HEK293 (cell line): ENCODE measurements at regions of chr2 and their contacts with region 1.

Region 1: DNA sequence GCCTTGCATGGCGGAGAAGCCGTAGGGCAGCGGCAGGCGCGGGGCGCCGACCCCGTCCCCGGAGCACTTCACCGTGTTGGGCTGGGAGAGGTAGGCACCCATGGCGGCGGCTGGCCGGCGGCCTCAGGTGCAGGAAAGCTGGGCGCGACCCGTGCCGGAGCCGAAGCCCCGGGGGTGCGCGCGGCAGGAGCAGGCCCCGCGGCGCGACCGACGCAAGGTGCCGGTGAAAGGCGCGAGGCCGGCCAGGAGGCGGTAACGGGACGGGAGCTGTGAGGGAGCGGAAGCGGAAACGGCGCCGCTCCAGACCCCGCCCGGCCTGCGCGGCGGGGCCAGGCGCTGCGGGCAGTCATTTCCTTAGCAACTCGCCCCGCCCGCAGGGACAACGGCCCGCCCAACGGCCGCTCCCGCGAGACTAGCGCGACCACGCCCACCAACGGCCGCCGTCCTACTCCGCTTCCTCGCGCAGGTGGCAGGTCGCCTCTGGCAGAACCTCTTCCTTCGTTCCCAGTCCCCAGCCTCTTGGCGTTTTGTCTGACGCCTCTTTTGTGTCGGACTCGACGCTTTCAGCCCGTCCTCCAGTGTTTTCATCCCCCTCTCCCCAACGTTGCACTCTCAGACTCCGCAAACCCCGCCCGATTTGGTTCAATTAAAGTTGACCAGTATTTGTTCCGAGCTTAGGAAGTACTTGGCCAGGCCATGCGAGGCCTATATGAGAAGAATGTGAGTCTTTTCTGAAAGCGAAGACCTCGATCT is at the start of gene PPM1G:
- H3K4me3 ChIP-seq: peak within 1 kb of the TSS; percentile 98
- H3K27ac ChIP-seq: peak within 1 kb of the TSS; percentile 96
- H3K4me1 ChIP-seq: peaks cover 9% of the 10 kb centered on the region; the same call in 1 of the 2 replicates
- CTCF ChIP-seq: peak; percentile 4

Region 2: DNA sequence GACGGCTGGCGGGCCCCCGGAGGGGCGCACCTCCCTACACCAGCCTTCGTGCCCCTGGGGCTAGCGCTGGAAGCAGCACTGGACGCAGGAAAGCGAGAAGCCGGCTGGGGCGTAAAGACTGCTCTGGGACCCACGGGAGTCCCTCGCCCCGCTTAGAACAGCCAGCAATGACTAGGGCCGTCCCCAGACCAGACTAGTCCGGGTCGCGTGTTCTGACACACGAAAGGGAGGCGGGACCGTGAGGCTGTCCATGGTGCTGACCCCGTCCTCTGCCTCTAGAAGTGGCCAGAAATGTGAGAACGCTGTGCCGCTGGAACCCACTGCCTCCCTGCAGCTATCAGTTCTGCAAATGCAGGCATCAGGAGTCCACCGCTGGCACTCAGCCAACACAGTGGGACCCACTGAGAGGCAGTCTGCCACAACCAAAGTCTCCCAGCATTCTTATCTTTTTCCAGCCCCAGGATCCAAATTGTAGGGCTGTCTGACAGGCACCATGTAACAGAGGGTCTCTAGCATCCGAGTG is 101.1 kb before region 1 on chr2 and contains the start of gene UCN:
- CTCF ChIA-PET with region 1: no interaction called
- POLR2A ChIA-PET with region 1: no interaction called
- H3K4me3 ChIP-seq: no peak within 1 kb of the TSS
- H3K27ac ChIP-seq: no peak within 1 kb of the TSS
- H3K4me1 ChIP-seq: no peaks in the 10 kb centered on the region
- CTCF ChIP-seq: no peak

Region 3: DNA sequence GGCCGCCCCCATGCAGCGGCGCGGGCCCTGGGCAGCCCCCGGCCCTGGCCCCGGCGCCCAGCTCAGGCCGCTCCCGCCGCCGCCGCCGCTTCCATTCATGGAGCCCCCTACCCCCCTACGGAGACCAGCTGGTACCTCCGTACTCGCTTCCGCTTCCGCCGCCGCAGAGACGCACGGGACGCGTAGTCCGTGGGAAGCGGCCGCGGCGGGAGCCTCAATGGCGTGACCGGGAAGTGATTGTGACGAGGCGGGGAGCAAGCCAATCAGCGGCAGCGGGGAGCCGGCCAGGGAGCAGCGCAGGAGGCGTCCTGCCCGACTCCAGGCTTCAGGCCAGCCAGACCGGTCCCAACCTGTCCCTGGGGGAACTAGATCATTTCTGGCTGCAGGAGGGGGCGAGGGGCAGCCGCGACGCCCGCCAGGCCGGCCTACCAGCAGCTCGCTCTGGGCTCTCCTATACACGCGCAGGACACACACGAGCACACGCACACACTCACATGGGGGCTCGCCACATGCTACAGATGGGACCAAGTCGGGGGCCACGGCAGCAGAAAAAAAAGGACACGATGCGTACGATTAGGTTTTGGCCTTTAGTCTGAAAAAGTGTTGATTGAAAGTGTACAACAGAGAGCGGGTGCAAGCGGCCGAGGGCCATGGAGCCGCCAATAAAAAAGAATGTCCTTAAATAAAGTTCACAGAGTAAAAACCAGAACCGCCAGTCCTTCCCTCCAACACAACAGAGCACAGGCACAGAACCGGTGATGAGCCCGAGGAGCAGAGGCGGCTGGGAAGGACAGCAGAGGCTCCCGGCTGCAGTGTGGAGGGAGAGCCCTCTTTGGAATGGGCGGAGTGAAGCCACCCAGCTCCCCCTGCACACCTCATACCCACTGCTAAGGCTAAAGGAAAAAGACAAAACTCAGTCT is 28.6 kb before region 1 on chr2 and contains the start of gene ZNF513:
- CTCF ChIA-PET with region 1: no interaction called
- POLR2A ChIA-PET with region 1: interaction called, 13 read pairs
- H3K4me3 ChIP-seq: peak within 1 kb of the TSS; percentile 72
- H3K27ac ChIP-seq: peak within 1 kb of the TSS; percentile 82
- H3K4me1 ChIP-seq: no peaks in the 10 kb centered on the region; the same call in 1 of the 2 replicates
- CTCF ChIP-seq: no peak

Region 4: DNA sequence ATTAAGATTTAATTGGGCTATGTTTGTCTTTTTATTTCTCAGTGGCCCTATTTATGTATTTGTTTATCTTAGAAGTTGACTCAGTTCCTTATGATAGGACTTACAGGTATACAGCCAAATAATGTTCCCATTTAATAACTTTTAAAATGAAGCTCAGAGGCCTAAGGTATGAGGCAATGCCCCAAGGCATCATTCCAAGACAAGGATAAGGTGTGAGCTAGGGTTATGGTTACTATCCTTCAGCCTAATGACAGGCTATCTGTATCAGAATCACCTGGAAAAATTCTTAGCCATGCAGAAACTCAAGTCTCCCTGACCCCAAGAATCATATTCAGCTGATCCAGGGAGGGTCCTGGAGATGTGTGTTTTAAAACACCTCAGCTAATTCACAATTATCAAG is 11.5 kb after region 1 on chr2:
- CTCF ChIA-PET with region 1: interaction called, 5 read pairs
- POLR2A ChIA-PET with region 1: interaction called, 13 read pairs
- H3K4me3 ChIP-seq: no peak overlapping the region
- H3K27ac ChIP-seq: no peak overlapping the region
- H3K4me1 ChIP-seq: no peaks in the 10 kb centered on the region
- CTCF ChIP-seq: no peak

Region 5: DNA sequence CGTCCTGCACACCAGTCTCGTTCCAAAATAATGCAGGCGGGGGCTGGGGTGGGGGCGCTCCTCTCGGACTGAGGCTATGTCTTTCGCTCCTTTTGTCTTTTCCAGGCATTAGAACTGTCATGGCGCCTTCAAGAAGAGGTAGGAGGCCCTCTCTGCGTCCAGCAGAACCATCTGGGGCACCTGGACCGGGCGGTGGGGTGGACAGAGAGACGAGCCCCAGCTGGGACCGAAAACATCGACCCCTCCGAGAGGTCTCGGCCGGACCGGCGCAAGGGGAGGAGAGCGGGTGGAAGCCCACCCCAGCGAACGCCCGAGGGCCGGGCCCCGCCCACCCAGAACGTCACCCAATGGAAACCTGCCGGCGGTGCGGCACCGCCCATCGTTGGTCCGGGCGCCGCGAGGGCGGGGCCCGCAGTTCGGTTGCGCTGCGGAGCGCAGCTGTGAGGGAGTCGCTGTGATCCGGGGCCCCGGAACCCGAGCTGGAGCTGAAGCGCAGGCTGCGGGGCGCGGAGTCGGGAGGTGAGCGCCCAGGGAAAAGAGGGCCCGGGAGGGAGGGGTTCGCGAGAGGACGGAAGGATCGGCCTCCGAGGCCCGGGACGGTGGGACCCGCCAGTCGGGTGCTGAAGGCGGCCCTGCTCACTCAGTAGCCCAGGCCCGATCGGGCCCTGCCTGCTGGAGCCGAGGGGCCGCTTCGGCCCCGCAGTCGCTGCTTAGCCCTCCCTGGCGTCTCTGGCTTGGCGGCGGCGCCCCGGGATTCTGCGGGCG is 18.9 kb after region 1 on chr2 and contains the start of gene NRBP1:
- CTCF ChIA-PET with region 1: interaction called, 15 read pairs
- POLR2A ChIA-PET with region 1: interaction called, 56 read pairs
- H3K4me3 ChIP-seq: peak within 1 kb of the TSS; percentile 70
- H3K27ac ChIP-seq: peak within 1 kb of the TSS; percentile 96
- H3K4me1 ChIP-seq: peaks cover 11% of the 10 kb centered on the region
- CTCF ChIP-seq: peak; percentile 69

Region 6: DNA sequence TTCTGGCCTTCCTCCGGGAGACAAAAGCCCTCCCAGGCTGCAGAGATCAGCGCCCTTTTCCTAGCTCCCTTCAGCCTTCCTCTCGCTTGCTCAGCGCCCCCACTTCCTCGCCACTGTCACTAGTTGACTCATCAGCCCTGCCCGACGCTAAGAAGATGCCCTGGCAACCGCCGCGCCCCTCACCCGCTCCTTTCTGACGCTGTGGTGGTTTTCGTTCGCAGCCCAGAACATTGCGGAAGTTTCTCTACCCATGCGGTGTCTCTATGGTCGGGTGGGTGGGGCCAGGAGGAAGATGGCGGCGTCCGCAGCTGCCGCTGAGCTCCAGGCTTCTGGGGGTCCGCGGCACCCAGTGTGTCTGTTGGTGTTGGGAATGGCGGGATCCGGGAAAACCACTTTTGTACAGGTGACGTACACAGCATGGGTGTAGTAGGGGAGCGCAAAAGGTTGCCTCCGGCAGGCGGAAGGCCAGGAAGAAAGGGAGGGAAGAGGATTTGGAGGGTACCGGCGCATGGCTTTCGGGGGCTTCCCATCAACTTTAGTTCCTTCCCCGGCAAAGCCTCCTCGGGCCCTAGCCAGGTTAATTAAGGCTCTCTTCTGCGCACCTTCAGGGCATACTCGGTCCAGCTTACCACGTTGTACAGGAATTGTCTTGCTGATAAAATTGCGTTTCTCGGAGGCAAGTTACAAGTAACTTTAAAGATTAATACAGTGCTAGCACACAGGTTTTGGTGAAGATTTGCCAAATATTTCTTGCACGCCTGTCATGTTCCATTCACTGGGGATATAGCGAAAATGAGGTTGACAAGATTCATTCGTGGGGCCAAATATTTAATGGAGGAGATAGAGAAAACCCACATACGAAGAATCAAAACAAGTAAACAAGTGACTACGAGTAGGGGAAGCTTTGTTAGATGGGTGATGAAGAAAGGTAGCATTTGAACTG is 219.5 kb after region 1 on chr2 and contains the starts of genes CCDC121 and GPN1:
- CTCF ChIA-PET with region 1: no interaction called
- POLR2A ChIA-PET with region 1: interaction called, 11 read pairs
- H3K4me3 ChIP-seq: peak within 1 kb of the TSS; percentile 55
- H3K27ac ChIP-seq: peak within 1 kb of the TSS; percentile 42; the same call in 1 of the 2 replicates
- H3K4me1 ChIP-seq: 0 out of 2 replicates have a peak, but pooled peaks cover 2% of the 10 kb centered on the region
- CTCF ChIP-seq: no peak; the same call in 1 of the 2 replicates

Region 7: DNA sequence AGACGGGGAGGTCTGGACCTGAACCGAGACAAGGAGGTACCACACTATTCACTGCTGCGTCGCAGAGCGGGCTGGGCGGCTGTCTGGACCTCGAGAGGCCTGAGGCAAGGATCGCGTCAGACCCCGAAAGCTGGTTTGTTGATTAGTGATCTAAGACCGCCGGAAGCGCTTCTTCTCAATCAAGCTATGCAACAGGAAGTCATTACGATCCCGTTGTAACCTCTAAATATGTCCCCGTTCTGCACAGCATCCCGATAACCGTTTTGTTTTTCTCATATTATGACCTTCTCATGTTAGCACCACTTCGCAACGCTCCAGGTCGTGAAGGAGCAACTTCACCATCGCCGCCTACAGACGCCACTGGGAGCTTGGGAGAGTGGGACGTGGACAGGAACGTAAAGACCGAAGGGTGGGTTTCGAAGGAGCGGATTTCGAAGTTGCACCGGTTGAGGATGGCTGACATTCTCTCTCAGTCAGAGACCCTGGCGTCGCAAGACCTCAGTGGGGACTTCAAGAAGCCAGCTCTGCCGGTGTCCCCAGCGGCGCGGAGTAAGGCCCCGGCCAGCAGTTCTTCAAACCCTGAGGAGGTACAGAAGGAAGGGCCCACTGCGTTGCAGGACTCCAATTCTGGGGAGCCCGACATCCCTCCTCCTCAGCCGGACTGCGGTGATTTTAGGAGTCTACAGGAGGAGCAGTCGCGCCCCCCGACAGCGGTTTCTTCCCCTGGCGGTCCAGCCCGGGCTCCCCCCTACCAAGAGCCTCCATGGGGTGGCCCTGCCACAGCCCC is 254.2 kb after region 1 on chr2 and contains the starts of genes SLC4A1AP and SUPT7L:
- CTCF ChIA-PET with region 1: no interaction called
- POLR2A ChIA-PET with region 1: interaction called, 14 read pairs
- H3K4me3 ChIP-seq: peak within 1 kb of the TSS; percentile 78
- H3K27ac ChIP-seq: peak within 1 kb of the TSS; percentile 72
- H3K4me1 ChIP-seq: peaks cover 7% of the 10 kb centered on the region; the same call in 1 of the 2 replicates
- CTCF ChIP-seq: peak; percentile 70; the same call in 1 of the 2 replicates